A549 (cell line): ENCODE measurements at regions of chr2 and their contacts with region 1.

Region 1: GRCh38 chr2:101781326-101781725 is 83.8 kb downstream of the MAP4K4 start:
- DNase-seq: no peak
- ATAC-seq: no peak
- H3K4me3 ChIP-seq: no peak overlapping the region
- H3K27ac ChIP-seq: no peak overlapping the region
- H3K4me1 ChIP-seq: peaks cover 20% of the 10 kb centered on the region
- CTCF ChIP-seq: no peak
- EP300 ChIP-seq: no peak
- POLR2A ChIP-seq: no peak
- RAD21 ChIP-seq: no peak

Region 2: DNA sequence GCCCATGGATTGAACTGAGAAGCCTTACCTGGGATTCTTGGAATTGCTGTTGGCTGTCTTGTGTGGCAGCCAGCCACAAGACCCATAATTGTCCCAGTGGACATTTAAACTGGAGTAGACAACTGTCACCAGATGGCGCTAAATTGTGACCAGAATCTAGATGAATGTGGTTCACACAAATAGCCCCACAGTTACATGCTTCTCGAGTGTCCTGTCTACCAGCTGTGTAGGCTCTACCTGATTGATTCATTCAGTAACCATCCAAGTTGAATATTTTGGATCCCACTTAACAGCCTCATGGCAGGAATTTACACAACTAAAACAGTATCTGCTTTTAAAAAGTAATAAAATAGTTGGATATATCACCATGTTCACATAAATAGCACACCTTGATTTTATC is 10.6 kb before region 1 on chr2:
- CTCF ChIA-PET with region 1: interaction called, 15 read pairs
- POLR2A ChIA-PET with region 1: interaction called, 3 read pairs
- DNase-seq: peak; percentile 36 to 67
- ATAC-seq: peak; percentile 68 to 69; a peak in 5 of 6 replicates
- H3K4me3 ChIP-seq: no peak overlapping the region
- H3K27ac ChIP-seq: peak overlapping the region in 1 of 2 experiments; percentile 20; a peak in 1 of 6 replicates
- H3K4me1 ChIP-seq: peaks cover 63% of the 10 kb centered on the region
- CTCF ChIP-seq: peak; percentile 54
- EP300 ChIP-seq: no peak
- POLR2A ChIP-seq: no peak
- RAD21 ChIP-seq: peak; percentile 53 to 54